ENCODE measurements at regions of chr6 and their contacts with region 1.

Region 1: GRCh38 chr6:35681298-35681697 is 7.4 kb downstream of the FKBP5 start:
- DNase-seq: peak; percentile 75
- H3K4me3 Mint-ChIP-seq: peak overlapping the region; percentile 2
- H3K27ac Mint-ChIP-seq: peak overlapping the region; percentile 66
- H3K4me1 Mint-ChIP-seq: peaks cover 55% of the 10 kb centered on the region
- H3K27me3 Mint-ChIP-seq: no peaks in the 10 kb centered on the region

Region 2: DNA sequence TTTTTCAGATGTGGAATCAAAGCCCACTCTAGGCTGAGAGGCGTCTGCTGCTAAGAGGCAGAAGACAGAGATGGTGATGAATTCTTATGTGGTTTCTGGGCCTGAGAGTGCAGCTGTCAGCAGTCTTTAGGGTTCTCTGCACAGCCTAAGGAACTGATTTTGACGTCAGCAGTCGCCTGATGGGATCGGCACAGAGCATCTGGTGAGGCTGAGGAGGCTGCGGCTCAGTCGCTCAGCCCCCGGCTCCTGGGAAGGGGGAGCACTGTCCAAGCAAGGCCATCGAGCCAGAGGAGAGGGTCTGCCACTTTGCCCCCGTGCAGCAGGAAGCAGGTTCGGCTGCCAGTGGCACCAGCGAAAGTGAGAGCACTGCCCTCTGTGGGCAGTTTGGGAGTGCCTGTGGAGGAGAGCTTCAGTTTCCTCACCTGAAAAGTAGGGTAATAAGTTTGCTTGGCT is 632.6 kb before region 1 on chr6:
- CTCF ChIA-PET with region 1: no interaction called
- POLR2A ChIA-PET with region 1: no interaction called
- intact Hi-C with region 1: no loop called
- DNase-seq: peak; percentile 31
- H3K4me3 Mint-ChIP-seq: no peak overlapping the region
- H3K27ac Mint-ChIP-seq: no peak overlapping the region
- H3K4me1 Mint-ChIP-seq: peaks cover 11% of the 10 kb centered on the region
- H3K27me3 Mint-ChIP-seq: no peaks in the 10 kb centered on the region

Region 3: GRCh38 chr6:35601331-35602132 is 79.8 kb before region 1 on chr6:
- CTCF ChIA-PET with region 1: interaction called, 4 read pairs
- POLR2A ChIA-PET with region 1: interaction called, 4 read pairs
- intact Hi-C with region 1: loop called (anchors 2 kb)
- DNase-seq: peak; percentile 76
- H3K4me3 Mint-ChIP-seq: peak overlapping the region; percentile 54
- H3K27ac Mint-ChIP-seq: peak overlapping the region; percentile 80
- H3K4me1 Mint-ChIP-seq: peaks cover 73% of the 10 kb centered on the region
- H3K27me3 Mint-ChIP-seq: no peaks in the 10 kb centered on the region

Region 4: DNA sequence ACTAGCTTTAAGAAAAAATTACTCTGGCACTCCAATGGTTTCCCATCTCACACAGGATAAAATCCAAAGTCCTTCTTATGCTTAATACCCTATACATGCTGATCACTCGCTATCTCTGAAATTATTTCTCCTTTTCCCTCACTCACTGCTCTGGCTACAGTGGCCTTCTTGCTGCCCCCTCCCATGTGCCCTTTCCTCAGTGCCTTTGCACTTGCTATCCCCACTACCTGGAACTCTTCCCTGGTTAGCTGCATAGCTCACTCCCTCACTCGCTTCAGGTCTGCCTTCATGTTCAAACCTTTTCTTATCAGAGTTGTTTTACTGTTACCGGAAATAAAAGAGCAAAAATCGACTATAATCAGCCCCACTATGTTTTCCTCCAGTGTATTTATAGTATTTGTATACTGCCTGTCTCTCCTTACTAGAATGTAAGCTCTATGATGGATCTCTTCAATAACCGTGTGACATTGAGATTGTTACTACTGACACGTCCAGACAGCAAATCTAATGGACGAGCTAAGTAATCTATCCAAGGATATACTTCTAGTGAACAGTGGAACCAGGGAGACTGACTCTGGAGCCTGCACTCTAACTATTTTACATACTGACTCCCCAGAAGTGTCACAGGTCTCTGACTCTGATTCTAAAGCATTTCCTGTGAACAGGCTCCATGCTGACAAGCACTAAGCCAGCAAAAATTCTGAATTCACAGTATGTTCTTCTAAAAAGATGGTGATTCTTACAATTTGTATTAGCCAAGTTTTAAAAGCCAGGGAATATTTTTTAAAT is 17.7 kb before region 1 on chr6:
- CTCF ChIA-PET with region 1: interaction called, 20 read pairs
- POLR2A ChIA-PET with region 1: interaction called, 12 read pairs
- intact Hi-C with region 1: loop called (anchors 2 kb)
- DNase-seq: no peak
- H3K4me3 Mint-ChIP-seq: no peak overlapping the region
- H3K27ac Mint-ChIP-seq: no peak overlapping the region
- H3K4me1 Mint-ChIP-seq: peaks cover 21% of the 10 kb centered on the region
- H3K27me3 Mint-ChIP-seq: no peaks in the 10 kb centered on the region

Region 5: GRCh38 chr6:35669451-35670045 is 11.8 kb before region 1 on chr6:
- CTCF ChIA-PET with region 1: interaction called, 20 read pairs
- POLR2A ChIA-PET with region 1: interaction called, 12 read pairs
- intact Hi-C with region 1: loop called (anchors 1 kb)
- DNase-seq: no peak
- H3K4me3 Mint-ChIP-seq: peak overlapping the region; percentile 43
- H3K27ac Mint-ChIP-seq: peak overlapping the region; percentile 92
- H3K4me1 Mint-ChIP-seq: peaks cover 49% of the 10 kb centered on the region
- H3K27me3 Mint-ChIP-seq: no peaks in the 10 kb centered on the region

Region 6: GRCh38 chr6:35694462-35694861 is 13.2 kb after region 1 on chr6:
- CTCF ChIA-PET with region 1: no interaction called
- POLR2A ChIA-PET with region 1: no interaction called
- intact Hi-C with region 1: no loop called
- DNase-seq: no peak
- H3K4me3 Mint-ChIP-seq: no peak overlapping the region
- H3K27ac Mint-ChIP-seq: no peak overlapping the region
- H3K4me1 Mint-ChIP-seq: peaks cover 7% of the 10 kb centered on the region
- H3K27me3 Mint-ChIP-seq: no peaks in the 10 kb centered on the region

Region 7: GRCh38 chr6:35710241-35710847 is 29.0 kb after region 1 on chr6:
- CTCF ChIA-PET with region 1: interaction called, 7 read pairs
- POLR2A ChIA-PET with region 1: interaction called, 10 read pairs
- intact Hi-C with region 1: loop called (anchors 1 kb)
- DNase-seq: peak; percentile 76
- H3K4me3 Mint-ChIP-seq: no peak overlapping the region
- H3K27ac Mint-ChIP-seq: peak overlapping the region; percentile 87
- H3K4me1 Mint-ChIP-seq: peaks cover 23% of the 10 kb centered on the region
- H3K27me3 Mint-ChIP-seq: no peaks in the 10 kb centered on the region

Region 8: GRCh38 chr6:35719830-35720733 is 38.8 kb after region 1 on chr6:
- CTCF ChIA-PET with region 1: no interaction called
- POLR2A ChIA-PET with region 1: interaction called, 10 read pairs
- intact Hi-C with region 1: loop called (anchors 1 kb)
- DNase-seq: peak; percentile 60
- H3K4me3 Mint-ChIP-seq: peak overlapping the region; percentile 52
- H3K27ac Mint-ChIP-seq: peak overlapping the region; percentile 86
- H3K4me1 Mint-ChIP-seq: peaks cover 71% of the 10 kb centered on the region
- H3K27me3 Mint-ChIP-seq: no peaks in the 10 kb centered on the region

Region 9: DNA sequence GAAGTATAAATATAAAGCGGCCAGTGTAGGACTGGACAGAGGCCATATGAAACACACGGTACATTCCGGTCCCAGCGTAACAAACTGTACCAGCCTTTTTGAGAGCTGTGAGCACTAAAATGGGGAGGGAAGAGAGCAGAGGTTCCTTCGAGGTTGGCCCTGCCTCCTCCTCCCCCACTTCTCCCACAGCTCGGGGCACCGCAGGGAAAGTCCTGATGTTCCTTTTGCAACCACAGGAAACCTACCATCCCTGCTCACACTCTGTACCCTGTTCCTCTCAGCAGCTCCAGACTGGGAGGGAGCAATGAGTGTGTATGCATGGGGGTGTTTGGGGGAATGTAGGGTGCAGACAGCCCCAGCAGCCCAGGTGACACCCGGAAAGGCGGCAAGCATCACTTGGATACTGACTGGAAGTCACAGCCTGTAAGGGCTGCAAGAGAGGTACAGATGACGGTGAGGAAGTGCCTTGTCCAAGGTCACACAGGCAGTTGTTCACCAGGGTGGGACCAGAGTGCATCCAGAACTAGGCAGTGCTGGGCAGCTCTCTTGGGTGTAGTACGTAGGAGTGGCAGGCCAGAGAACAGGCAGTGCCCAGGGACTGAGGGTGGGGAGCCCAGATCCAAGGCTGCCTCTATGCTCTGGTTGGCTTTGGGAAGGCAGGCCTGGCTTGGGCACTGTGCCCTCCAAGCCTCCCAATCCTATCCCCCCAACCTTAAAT is 44.6 kb after region 1 on chr6:
- CTCF ChIA-PET with region 1: interaction called, 6 read pairs
- POLR2A ChIA-PET with region 1: interaction called, 3 read pairs
- intact Hi-C with region 1: loop called (anchors 1 kb)
- DNase-seq: peak; percentile 48
- H3K4me3 Mint-ChIP-seq: peak overlapping the region; percentile 66
- H3K27ac Mint-ChIP-seq: peak overlapping the region; percentile 87
- H3K4me1 Mint-ChIP-seq: peaks cover 78% of the 10 kb centered on the region
- H3K27me3 Mint-ChIP-seq: no peaks in the 10 kb centered on the region

Region 10: DNA sequence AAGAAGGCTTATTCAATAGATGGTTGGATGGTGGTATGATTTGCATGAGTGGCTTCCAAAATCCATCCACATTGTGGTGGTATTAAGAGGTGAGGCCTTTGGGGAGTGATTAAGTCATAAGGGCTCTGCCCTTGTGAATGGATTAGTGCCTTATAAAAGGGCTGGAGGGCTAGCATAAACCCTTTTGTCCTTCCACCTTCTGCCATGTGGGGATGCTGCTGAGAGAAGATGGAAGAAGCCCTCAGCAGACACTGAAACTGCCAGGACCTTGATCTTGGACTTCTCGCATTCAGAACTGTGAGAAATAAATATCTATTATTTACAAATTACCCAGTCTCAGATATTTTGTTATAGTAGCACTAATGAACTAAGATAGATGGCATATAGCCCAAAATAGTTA is 267.4 kb after region 1 on chr6:
- CTCF ChIA-PET with region 1: no interaction called
- POLR2A ChIA-PET with region 1: no interaction called
- intact Hi-C with region 1: no loop called
- DNase-seq: no peak
- H3K4me3 Mint-ChIP-seq: no peak overlapping the region
- H3K27ac Mint-ChIP-seq: no peak overlapping the region
- H3K4me1 Mint-ChIP-seq: peaks cover 14% of the 10 kb centered on the region
- H3K27me3 Mint-ChIP-seq: no peaks in the 10 kb centered on the region

Measured in activated CD4-positive, alpha-beta memory T cell treated with anti-CD3 and anti-CD28 coated beads for 36 hours (primary cell).